Tibial artery (tissue), 4 donors: ENCODE measurements at regions of chr12 and their contacts with region 1.

Region 1: GRCh38 chr12:8887285-8887715 is 27.0 kb upstream of the PHC1 start:
- DNase-seq: no peak
- H3K4me3 ChIP-seq: no peak overlapping the region
- H3K27ac ChIP-seq: no peak overlapping the region
- H3K4me1 ChIP-seq: no peaks in the 10 kb centered on the region
- H3K27me3 ChIP-seq: no peaks in the 10 kb centered on the region
- CTCF ChIP-seq: no peak

Region 2: DNA sequence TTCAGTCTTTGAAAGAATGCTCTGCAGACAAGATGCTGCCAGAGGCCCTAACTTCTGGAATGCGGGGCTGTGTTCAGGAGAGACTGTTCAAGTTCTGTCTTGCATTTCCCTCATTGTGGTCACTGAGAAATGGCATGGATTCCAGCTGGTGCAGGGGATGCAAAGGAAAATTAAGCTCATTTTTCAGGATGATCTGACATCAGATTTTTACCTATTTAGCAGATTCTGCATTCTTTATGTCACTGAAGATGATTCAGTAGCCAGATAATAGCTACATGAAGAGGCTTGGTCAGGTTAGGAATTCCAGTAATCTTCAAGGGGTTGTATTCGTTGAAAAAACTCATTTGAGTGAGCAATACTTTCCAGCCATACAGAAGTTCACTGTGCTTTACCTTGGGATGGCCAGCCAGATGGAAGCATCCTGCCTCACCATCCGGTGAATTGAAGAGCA is 208.6 kb before region 1 on chr12:
- intact Hi-C with region 1: loop called (anchors 5 kb)
- DNase-seq: no peak
- H3K4me3 ChIP-seq: no peak overlapping the region
- H3K27ac ChIP-seq: no peak overlapping the region
- H3K4me1 ChIP-seq: peaks cover 0 to 12% (median 9%) of the 10 kb centered on the region in 4 donors
- H3K27me3 ChIP-seq: no peaks in the 10 kb centered on the region
- CTCF ChIP-seq: no peak